Gastrocnemius medialis (tissue), 4 donors: ENCODE measurements at regions of chr16 and their contacts with region 1.

Region 1: GRCh38 chr16:81737885-81738786 is 41.0 kb upstream of the PLCG2 start:
- DNase-seq: peak; percentile 38 to 47
- ATAC-seq: peak; percentile 85 to 87
- H3K4me3 ChIP-seq: peak overlapping the region in 2 of 4 donors; percentile 7 to 37
- H3K27ac ChIP-seq: no peak overlapping the region
- H3K4me1 ChIP-seq: peaks cover 3 to 6% of the 10 kb centered on the region in 2 donors
- H3K27me3 ChIP-seq: no peaks in the 10 kb centered on the region
- CTCF ChIP-seq: peak; percentile 59 to 72 (median 65)
- POLR2A ChIP-seq: no peak

Region 2: DNA sequence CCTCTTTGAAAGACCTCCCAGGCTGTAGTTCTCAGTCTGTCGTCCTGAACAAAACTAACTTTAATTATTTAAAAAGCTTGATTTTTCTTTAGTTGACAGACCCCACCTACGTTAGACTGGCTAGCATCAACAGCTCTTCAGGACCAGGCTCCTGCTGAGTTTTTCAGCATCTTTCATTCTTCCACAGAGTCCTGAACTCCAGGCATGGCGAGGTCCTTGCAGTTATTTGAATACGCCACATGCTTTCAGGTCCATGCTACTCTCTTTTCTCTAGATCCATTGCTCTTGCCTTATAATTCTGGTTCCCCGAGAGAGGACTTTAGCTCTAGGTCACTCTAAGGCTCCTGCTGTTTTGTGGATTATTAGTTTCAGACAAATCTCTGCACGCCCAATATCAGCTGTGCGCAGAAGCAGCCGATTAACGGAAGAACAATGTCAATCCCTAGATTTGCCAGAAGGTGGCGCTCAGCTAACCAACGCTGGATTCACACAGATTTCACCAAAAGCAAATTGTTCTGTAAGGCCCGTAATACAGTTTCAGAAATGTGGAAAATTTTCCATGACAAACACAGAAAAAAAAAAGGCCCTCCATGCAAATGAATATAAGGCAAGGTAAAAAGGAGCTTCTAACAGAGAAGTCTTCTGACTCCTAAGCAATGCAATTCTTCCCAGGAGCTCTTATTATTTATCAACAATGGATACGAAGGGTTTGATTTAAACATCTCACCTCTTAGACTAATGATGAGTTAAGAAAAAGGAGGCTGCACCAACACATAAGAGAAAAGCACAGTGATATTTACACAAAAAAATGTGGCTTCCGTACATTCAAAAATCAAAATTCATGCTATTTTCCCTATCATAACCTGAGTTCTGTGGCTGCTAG is 533.1 kb before region 1 on chr16:
- in situ Hi-C with region 1: loop called in 1 of 4 experiments (anchors 25 kb)
- intact Hi-C with region 1: no loop called
- DNase-seq: no peak
- ATAC-seq: peak; percentile 54 to 62
- H3K4me3 ChIP-seq: no peak overlapping the region
- H3K27ac ChIP-seq: no peak overlapping the region
- H3K4me1 ChIP-seq: no peaks in the 10 kb centered on the region
- H3K27me3 ChIP-seq: no peaks in the 10 kb centered on the region
- CTCF ChIP-seq: peak in 4 of 5 experiments; percentile 48 to 53 (median 50)
- POLR2A ChIP-seq: no peak

Region 3: GRCh38 chr16:82070656-82071369 is 332.7 kb after region 1 on chr16:
- in situ Hi-C with region 1: no loop called
- intact Hi-C with region 1: no loop called
- DNase-seq: no peak
- ATAC-seq: no peak
- H3K4me3 ChIP-seq: no peak overlapping the region
- H3K27ac ChIP-seq: no peak overlapping the region
- H3K4me1 ChIP-seq: no peaks in the 10 kb centered on the region
- H3K27me3 ChIP-seq: no peaks in the 10 kb centered on the region
- CTCF ChIP-seq: no peak
- POLR2A ChIP-seq: no peak